ENCODE measurements at regions of chr2 and their contacts with region 1.

Region 1: DNA sequence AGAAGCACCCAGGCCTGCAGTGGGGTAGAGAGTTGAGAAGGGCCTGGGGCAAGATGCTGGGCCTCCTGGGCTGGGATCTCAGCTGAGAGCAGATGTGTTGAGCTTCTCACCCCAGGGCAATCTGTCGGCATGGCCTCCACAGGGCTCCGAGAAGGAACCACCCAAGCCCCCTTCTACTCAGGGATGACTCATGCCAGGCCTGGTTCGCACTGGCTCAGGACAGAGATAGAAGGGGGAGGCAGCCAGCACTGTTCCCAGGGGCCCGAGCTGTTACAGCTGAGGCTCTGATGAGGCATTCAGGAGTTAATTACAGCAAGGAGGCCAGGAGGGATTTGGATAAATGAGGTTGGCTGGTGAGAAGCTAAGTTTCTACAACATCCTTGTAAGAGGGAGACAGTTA is 62.5 kb downstream of the CENPO start:
- DNase-seq: no peak

Region 2: GRCh38 chr2:24771764-24772586 is 83.8 kb before region 1 on chr2:
- intact Hi-C with region 1: no loop called
- DNase-seq: no peak

Region 3: GRCh38 chr2:24871852-24872323 is 16.2 kb after region 1 on chr2:
- intact Hi-C with region 1: no loop called
- DNase-seq: no peak

Region 4: DNA sequence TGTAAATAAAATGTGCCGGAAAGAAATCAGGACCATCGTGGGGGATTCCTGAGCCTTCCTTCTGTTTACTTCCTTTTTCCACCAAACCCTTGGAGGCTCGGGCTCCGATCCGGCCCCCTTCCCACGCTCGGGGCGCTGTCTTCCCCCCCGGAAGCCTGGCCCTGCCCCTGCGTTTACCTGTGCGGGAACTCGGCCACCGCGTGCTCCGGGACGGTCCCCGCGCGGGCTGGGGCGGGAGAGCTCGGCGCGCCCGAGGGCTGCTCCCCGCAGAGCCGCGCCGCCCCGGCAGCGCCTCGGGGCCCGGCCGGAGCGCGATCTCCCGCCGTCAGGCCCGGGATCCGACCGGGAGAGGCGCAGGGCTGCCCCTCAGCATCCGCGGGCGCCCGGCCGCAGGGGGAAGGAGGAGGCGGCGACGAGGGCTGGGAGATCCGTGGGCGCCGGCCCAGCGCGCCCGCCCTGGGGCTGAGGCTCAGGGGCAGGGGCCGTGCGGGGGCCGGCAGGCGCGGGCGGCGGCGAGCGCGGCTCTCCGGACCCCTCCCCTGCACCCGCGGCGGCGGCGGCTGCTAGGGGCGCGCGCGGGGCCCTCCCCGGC is 63.9 kb after region 1 on chr2:
- intact Hi-C with region 1: loop called (anchors 5 kb)
- DNase-seq: no peak

Measured in cardiac septum (tissue), 1 donor.